ENCODE measurements at regions of chr11 and their contacts with region 1.

Region 1: GRCh38 chr11:15101072-15101709 is 13.5 kb upstream of the INSC start:
- DNase-seq: peak; percentile 67
- ATAC-seq: peak; percentile 78
- H3K4me3 Mint-ChIP-seq: no peak overlapping the region
- H3K27ac Mint-ChIP-seq: no peak overlapping the region
- H3K4me1 Mint-ChIP-seq: no peaks in the 10 kb centered on the region
- H3K27me3 Mint-ChIP-seq: peaks cover 27% of the 10 kb centered on the region

Region 2: GRCh38 chr11:14872032-14872431 is 229.2 kb before region 1 on chr11:
- CTCF ChIA-PET with region 1: no interaction called
- POLR2A ChIA-PET with region 1: no interaction called
- DNase-seq: no peak
- ATAC-seq: no peak
- H3K4me3 Mint-ChIP-seq: no peak overlapping the region
- H3K27ac Mint-ChIP-seq: no peak overlapping the region
- H3K4me1 Mint-ChIP-seq: peaks cover 2% of the 10 kb centered on the region
- H3K27me3 Mint-ChIP-seq: no peaks in the 10 kb centered on the region

Region 3: GRCh38 chr11:15053191-15053685 is 48.0 kb before region 1 on chr11:
- CTCF ChIA-PET with region 1: no interaction called
- POLR2A ChIA-PET with region 1: no interaction called
- DNase-seq: no peak
- ATAC-seq: no peak
- H3K4me3 Mint-ChIP-seq: no peak overlapping the region
- H3K27ac Mint-ChIP-seq: no peak overlapping the region
- H3K4me1 Mint-ChIP-seq: no peaks in the 10 kb centered on the region
- H3K27me3 Mint-ChIP-seq: peaks cover 3% of the 10 kb centered on the region

Region 4: GRCh38 chr11:15074206-15075161 is 26.7 kb before region 1 on chr11:
- CTCF ChIA-PET with region 1: interaction called, 34 read pairs
- POLR2A ChIA-PET with region 1: no interaction called
- DNase-seq: peak; percentile 89
- ATAC-seq: peak; percentile 90
- H3K4me3 Mint-ChIP-seq: peak overlapping the region; percentile 69
- H3K27ac Mint-ChIP-seq: no peak overlapping the region
- H3K4me1 Mint-ChIP-seq: peaks cover 23% of the 10 kb centered on the region
- H3K27me3 Mint-ChIP-seq: peaks cover 14% of the 10 kb centered on the region

Region 5: DNA sequence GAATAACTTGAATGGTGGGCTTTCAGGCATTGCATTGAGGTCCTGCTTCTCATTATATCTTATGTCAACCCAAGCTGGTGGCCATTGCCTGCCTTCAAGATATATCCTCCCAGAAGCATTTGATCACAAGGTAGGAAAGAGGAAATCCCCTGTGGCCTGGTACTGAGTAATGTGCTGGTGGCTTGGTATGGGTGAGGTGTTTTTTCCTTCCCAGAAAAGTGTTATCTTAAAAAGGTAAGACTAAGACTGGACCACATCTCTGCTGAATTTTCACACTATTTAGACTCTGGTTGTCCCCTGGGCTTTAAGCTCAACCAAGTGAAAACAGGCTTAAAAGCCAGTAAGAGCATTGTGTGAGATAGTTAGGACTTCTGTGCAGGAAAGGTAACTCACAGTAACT is 17.2 kb after region 1 on chr11:
- CTCF ChIA-PET with region 1: interaction called, 38 read pairs
- POLR2A ChIA-PET with region 1: interaction called, 3 read pairs
- DNase-seq: peak; percentile 48
- ATAC-seq: peak; percentile 80
- H3K4me3 Mint-ChIP-seq: no peak overlapping the region
- H3K27ac Mint-ChIP-seq: peak overlapping the region; percentile 45
- H3K4me1 Mint-ChIP-seq: peaks cover 44% of the 10 kb centered on the region
- H3K27me3 Mint-ChIP-seq: peaks cover 38% of the 10 kb centered on the region

Region 6: DNA sequence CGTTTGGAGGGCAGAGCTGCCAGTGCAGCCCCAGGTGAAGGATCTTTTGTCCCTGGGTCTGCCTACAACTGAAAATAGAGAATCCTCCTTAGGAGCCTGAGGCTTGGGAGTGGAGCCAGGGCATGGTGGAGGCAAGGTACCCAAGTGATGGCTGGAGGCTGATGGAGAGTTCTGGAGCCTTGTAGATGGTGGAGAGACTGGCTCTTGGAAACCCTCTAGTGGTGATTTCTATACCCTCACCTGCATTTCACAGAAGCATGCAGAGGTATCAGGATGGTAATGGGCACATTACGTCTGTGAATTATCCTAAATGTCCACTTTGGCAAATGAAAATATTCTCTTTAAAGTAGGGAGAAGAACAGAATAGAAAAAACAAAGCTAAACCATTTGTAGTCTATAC is 57.9 kb after region 1 on chr11:
- CTCF ChIA-PET with region 1: interaction called, 72 read pairs
- POLR2A ChIA-PET with region 1: no interaction called
- DNase-seq: no peak
- ATAC-seq: peak; percentile 55
- H3K4me3 Mint-ChIP-seq: no peak overlapping the region
- H3K27ac Mint-ChIP-seq: no peak overlapping the region
- H3K4me1 Mint-ChIP-seq: no peaks in the 10 kb centered on the region
- H3K27me3 Mint-ChIP-seq: peaks cover 13% of the 10 kb centered on the region

Region 7: GRCh38 chr11:15208378-15209222 is 107.4 kb after region 1 on chr11:
- CTCF ChIA-PET with region 1: interaction called, 113 read pairs
- POLR2A ChIA-PET with region 1: no interaction called
- DNase-seq: peak; percentile 83
- ATAC-seq: peak; percentile 96
- H3K4me3 Mint-ChIP-seq: no peak overlapping the region
- H3K27ac Mint-ChIP-seq: no peak overlapping the region
- H3K4me1 Mint-ChIP-seq: no peaks in the 10 kb centered on the region
- H3K27me3 Mint-ChIP-seq: peaks cover 11% of the 10 kb centered on the region